ENCODE measurements at regions of chr22 and their contacts with region 1.

Region 1: DNA sequence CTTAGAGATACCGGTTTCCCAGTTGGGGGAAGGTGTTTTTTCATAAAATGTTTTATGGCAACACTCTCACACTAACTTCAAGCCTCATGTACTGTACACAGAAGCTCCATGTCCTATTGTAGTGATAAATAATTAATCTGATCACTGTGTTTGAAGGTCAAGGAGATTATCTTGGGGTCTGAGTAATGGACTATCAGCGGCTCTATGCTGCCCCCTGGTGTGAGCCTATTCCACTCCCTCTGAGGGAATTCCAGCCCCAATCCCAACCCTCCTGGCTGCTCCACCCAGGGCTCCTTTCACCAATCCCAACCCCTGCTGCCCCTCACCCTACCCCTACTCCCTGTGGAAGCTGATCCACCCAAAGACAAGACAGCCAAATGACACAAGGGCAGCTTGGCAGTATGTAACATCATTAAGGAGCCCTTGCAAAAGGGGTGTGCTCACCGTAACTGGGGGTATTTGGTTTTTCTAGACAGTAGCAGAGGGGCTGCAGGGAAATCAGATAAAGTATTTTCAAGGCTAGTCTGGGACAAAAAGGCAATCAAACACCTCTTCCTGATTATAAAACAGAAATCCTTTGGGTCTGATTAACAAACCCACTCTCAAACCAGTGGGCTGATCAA is 22.3 kb downstream of the HPS4 start:
- DNase-seq: peak; percentile 50 to 75
- H3K4me3 ChIP-seq: no peak overlapping the region
- H3K4me3 Mint-ChIP-seq: no peak overlapping the region
- H3K27ac Mint-ChIP-seq: no peak overlapping the region
- H3K4me1 ChIP-seq: no peaks in the 10 kb centered on the region
- H3K4me1 Mint-ChIP-seq: no peaks in the 10 kb centered on the region
- H3K27me3 ChIP-seq: no peaks in the 10 kb centered on the region
- H3K27me3 Mint-ChIP-seq: no peaks in the 10 kb centered on the region
- CTCF ChIP-seq: peak; percentile 80 to 88

Region 2: DNA sequence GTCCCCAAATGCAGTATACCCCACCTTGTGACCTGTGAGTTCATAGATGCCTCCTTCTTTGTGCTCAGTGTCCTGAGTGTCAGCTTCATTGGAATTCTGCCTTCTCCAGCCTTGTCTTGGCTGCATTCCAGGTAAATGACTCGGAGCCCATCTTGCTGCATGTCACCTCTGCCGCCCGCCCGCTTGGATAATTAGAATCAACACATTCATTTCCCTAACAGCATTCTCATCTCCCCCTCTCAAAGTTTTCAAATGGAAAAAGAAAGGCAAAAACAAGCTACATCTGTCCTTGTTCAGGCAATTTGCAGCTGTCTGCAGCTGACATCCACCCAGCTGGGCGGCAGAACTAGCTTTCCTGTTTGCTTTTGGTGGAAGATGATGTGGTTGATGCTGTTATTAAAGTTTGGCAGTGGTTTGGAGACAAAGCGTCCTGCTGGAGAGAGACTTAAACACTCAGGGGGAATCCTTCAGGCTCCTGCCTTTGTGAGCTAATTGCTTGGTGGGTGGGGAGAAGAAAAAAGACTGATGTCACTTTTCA is 490.9 kb before region 1 on chr22:
- CTCF ChIA-PET with region 1: no interaction called
- POLR2A ChIA-PET with region 1: no interaction called
- intact Hi-C with region 1: no loop called
- DNase-seq: no peak
- H3K4me3 ChIP-seq: no peak overlapping the region
- H3K4me3 Mint-ChIP-seq: no peak overlapping the region
- H3K27ac Mint-ChIP-seq: no peak overlapping the region
- H3K4me1 ChIP-seq: no peaks in the 10 kb centered on the region
- H3K4me1 Mint-ChIP-seq: no peaks in the 10 kb centered on the region
- H3K27me3 ChIP-seq: no peaks in the 10 kb centered on the region; the same call in 1 of the 2 replicates
- H3K27me3 Mint-ChIP-seq: peaks cover 17% of the 10 kb centered on the region
- CTCF ChIP-seq: no peak

Region 3: DNA sequence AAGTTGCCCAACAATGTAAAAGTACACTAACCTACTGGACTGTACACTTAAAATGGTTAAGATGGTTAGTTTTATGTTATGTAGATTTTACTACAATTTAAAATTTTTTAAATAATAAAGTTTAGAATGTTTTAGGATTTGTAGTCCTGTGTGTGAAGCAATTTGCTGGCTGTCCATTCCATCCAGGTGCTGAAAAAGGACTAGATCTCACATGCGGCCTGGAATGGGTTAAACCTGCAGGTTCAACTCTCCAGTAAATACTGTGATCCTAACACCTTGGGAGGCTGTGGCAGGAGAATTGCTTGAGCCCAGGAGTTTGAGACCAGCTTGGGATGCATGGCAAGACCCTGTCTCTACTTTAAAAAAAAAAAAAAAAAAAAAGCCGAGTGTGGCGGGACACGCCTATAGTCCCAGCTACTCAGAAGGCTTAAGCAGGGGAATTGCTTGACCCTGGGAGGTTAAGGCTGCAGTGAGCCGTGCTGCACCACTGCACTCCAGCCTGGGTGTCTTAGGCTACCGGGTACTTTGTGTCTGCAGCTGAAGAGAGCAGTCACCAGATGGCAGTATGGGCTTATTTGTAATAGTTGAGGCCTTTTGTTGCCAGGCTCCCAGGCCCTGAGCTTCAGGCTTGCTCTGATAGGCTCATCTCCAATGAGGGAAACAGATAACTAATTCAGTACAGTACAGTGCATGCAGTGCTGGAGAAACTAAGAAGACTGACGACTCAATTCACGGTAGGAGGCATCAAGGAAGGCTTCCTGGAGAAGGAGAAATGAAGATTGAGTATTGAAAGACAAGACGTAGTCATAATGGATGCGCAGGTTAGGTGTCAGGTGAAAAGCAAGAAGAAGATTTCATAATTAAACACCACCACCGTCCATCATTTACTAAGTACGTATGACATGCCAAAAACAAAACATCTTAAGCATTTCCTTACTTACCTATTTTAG is 97.0 kb before region 1 on chr22:
- CTCF ChIA-PET with region 1: interaction called, 29 read pairs
- POLR2A ChIA-PET with region 1: no interaction called
- intact Hi-C with region 1: loop called (anchors 1 kb)
- DNase-seq: peak; percentile 73 to 79
- H3K4me3 ChIP-seq: no peak overlapping the region
- H3K4me3 Mint-ChIP-seq: no peak overlapping the region
- H3K27ac Mint-ChIP-seq: no peak overlapping the region
- H3K4me1 ChIP-seq: no peaks in the 10 kb centered on the region
- H3K4me1 Mint-ChIP-seq: no peaks in the 10 kb centered on the region
- H3K27me3 ChIP-seq: no peaks in the 10 kb centered on the region
- H3K27me3 Mint-ChIP-seq: peaks cover 4% of the 10 kb centered on the region
- CTCF ChIP-seq: peak; percentile 62 to 72

Region 4: GRCh38 chr22:26380072-26380830 is 81.0 kb before region 1 on chr22:
- CTCF ChIA-PET with region 1: no interaction called
- POLR2A ChIA-PET with region 1: no interaction called
- intact Hi-C with region 1: loop called (anchors 5 kb)
- DNase-seq: no peak
- H3K4me3 ChIP-seq: no peak overlapping the region
- H3K4me3 Mint-ChIP-seq: no peak overlapping the region
- H3K27ac Mint-ChIP-seq: no peak overlapping the region
- H3K4me1 ChIP-seq: no peaks in the 10 kb centered on the region
- H3K4me1 Mint-ChIP-seq: no peaks in the 10 kb centered on the region
- H3K27me3 ChIP-seq: peaks cover 3% of the 10 kb centered on the region
- H3K27me3 Mint-ChIP-seq: peaks cover 14% of the 10 kb centered on the region
- CTCF ChIP-seq: no peak

Region 5: GRCh38 chr22:26398741-26399153 is 62.6 kb before region 1 on chr22:
- CTCF ChIA-PET with region 1: interaction called, 3 read pairs
- POLR2A ChIA-PET with region 1: no interaction called
- intact Hi-C with region 1: loop called (anchors 1 kb)
- DNase-seq: peak in 1 of 2 experiments; percentile 54
- H3K4me3 ChIP-seq: no peak overlapping the region
- H3K4me3 Mint-ChIP-seq: no peak overlapping the region
- H3K27ac Mint-ChIP-seq: no peak overlapping the region
- H3K4me1 ChIP-seq: no peaks in the 10 kb centered on the region
- H3K4me1 Mint-ChIP-seq: no peaks in the 10 kb centered on the region
- H3K27me3 ChIP-seq: no peaks in the 10 kb centered on the region
- H3K27me3 Mint-ChIP-seq: peaks cover 4% of the 10 kb centered on the region
- CTCF ChIP-seq: peak; percentile 42 to 53

Measured in Caco-2 (cell line).